AG04450 (cell line): ENCODE measurements at regions of chr12 and their contacts with region 1.

Region 1: GRCh38 chr12:111451649-111452129 is 46.0 kb downstream of the SH2B3 start:
- DNase-seq: no peak
- H3K4me3 ChIP-seq: no peak overlapping the region
- H3K27ac ChIP-seq: no peak overlapping the region
- H3K27me3 ChIP-seq: no peaks in the 10 kb centered on the region
- CTCF ChIP-seq: peak; percentile 78

Region 2: GRCh38 chr12:111405149-111405860 is 46.4 kb before region 1 on chr12:
- CTCF ChIA-PET with region 1: interaction called, 349 read pairs
- POLR2A ChIA-PET with region 1: no interaction called
- DNase-seq: peak; percentile 76
- H3K4me3 ChIP-seq: peak overlapping the region; percentile 58
- H3K27ac ChIP-seq: peak overlapping the region; percentile 65
- H3K27me3 ChIP-seq: no peaks in the 10 kb centered on the region
- CTCF ChIP-seq: peak; percentile 36

Region 3: DNA sequence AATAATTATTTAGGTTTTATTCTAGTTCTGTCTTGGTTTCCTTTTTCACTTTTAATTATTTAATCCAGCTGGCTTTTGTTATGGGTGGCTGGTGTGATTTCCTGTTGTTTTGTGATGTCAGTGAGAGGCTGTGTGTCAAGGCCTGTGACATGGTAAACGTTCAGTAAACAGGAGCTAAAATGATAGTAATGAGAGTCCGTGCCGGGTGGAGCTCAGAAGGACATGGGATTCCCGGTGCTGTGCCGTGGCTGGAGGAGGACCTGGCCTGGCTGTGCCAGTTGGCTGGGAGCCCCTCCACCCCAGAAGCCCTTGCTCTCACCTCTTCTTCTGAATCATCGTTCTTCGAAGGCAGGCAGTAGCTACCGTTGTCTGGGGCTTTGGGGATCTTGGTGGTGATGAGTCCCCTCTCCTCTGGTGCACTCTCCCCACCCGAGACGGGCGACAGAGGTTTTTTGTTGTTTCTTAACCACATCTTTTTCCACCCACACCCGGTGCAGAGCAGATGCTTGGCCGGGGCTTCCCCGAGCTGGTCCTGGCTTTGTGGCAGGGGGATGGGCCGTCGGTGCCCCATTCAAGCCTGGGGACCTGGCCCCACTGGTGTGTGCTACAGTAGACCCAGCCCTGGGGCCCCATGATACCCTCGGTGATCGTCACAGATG is 16.9 kb before region 1 on chr12:
- CTCF ChIA-PET with region 1: interaction called, 59 read pairs
- POLR2A ChIA-PET with region 1: interaction called, 5 read pairs
- DNase-seq: no peak
- H3K4me3 ChIP-seq: 0 out of 2 replicates have a peak overlapping the region, but pooled peaks have one; percentile 10
- H3K27ac ChIP-seq: peak overlapping the region; percentile 81
- H3K27me3 ChIP-seq: no peaks in the 10 kb centered on the region
- CTCF ChIP-seq: no peak

Region 4: GRCh38 chr12:111471236-111471635 is 19.5 kb after region 1 on chr12:
- CTCF ChIA-PET with region 1: interaction called, 21 read pairs
- POLR2A ChIA-PET with region 1: no interaction called
- DNase-seq: no peak
- H3K4me3 ChIP-seq: no peak overlapping the region
- H3K27ac ChIP-seq: no peak overlapping the region
- H3K27me3 ChIP-seq: no peaks in the 10 kb centered on the region
- CTCF ChIP-seq: no peak

Region 5: GRCh38 chr12:111505601-111506036 is 53.9 kb after region 1 on chr12:
- CTCF ChIA-PET with region 1: interaction called, 13 read pairs
- POLR2A ChIA-PET with region 1: no interaction called
- DNase-seq: no peak
- H3K4me3 ChIP-seq: no peak overlapping the region
- H3K27ac ChIP-seq: no peak overlapping the region
- H3K27me3 ChIP-seq: no peaks in the 10 kb centered on the region
- CTCF ChIP-seq: no peak